ENCODE measurements at regions of chr4 and their contacts with region 1.

Region 1: DNA sequence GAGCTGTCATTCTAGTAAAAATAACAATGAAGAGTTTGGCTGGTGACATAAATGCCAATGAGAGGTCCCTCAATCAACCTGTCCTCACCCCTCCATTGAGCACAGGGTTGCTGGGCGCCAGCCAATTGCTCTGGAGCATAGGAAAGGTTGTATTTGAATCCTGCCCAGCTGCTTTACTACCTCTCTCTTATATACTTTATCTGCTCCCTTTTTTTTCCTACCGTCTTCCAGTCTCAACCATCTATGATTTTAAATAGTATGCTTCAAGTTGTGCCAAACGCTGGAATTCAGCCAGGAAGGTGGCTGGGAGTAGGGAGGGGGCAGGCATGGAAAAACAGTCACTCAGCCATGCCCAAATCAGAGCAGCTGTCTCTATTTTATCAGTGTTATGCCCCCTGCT is 153.8 kb downstream of the NR3C2 start:
- DNase-seq: no peak
- H3K4me3 Mint-ChIP-seq: no peak overlapping the region
- H3K27ac Mint-ChIP-seq: no peak overlapping the region
- H3K4me1 Mint-ChIP-seq: peaks cover 19% of the 10 kb centered on the region
- H3K27me3 Mint-ChIP-seq: no peaks in the 10 kb centered on the region

Region 2: DNA sequence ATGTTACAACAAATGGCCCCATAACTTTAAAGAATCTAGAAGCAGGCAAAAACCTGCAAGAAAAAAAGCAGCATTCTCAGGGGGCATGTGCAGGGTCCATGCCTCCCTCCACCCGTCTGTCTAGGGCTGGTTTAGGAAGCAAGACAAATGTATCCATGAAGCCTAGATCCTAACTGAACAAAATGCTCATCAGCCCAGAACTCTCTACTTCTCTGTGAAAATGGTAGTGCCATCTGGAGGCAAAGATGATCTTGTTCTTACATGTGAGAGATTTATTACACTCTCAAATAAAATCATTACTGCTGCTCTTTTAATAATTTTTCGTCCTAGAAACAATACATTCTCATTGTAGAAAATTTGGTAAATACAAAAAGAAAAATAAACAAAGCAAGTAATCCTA is 127.1 kb after region 1 on chr4:
- CTCF ChIA-PET with region 1: no interaction called
- POLR2A ChIA-PET with region 1: no interaction called
- intact Hi-C with region 1: loop called (anchors 10 kb)
- DNase-seq: no peak
- H3K4me3 Mint-ChIP-seq: no peak overlapping the region
- H3K27ac Mint-ChIP-seq: no peak overlapping the region
- H3K4me1 Mint-ChIP-seq: peaks cover 44% of the 10 kb centered on the region
- H3K27me3 Mint-ChIP-seq: no peaks in the 10 kb centered on the region